PC-3 (cell line): ENCODE measurements at regions of chr9 and their contacts with region 1.

Region 1: GRCh38 chr9:128927731-128928411 is 7.1 kb downstream of the PHYHD1 start:
- DNase-seq: peak; percentile 62
- ATAC-seq: peak; percentile 79
- H3K4me3 ChIP-seq: no peak overlapping the region
- H3K27ac ChIP-seq: no peak overlapping the region
- H3K4me1 ChIP-seq: no peaks in the 10 kb centered on the region
- H3K27me3 ChIP-seq: no peaks in the 10 kb centered on the region
- CTCF ChIP-seq: peak; percentile 85

Region 2: DNA sequence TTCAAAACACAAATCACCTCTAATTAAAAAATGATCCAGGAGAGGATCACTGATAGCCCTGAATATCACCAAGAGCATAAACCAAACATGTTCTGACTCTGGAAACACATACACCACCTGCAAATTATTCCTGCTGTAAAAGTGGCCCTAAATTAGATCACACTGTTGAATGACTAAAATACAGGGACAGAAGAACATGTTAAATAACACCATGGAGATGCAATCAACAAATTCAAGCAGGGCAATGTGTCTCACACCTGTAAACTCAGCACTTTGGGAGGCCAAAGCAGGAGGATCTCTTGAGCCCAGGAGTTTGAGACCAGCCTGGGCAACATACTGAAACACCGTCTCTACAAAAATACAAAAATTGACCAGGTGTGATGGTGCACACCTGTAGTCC is 80.1 kb before region 1 on chr9:
- CTCF ChIA-PET with region 1: no interaction called
- POLR2A ChIA-PET with region 1: no interaction called
- intact Hi-C with region 1: loop called (anchors 1 kb)
- DNase-seq: no peak
- ATAC-seq: no peak
- H3K4me3 ChIP-seq: no peak overlapping the region
- H3K27ac ChIP-seq: no peak overlapping the region
- H3K4me1 ChIP-seq: peaks cover under 1% of the 10 kb centered on the region; the same call in 1 of the 2 replicates
- H3K27me3 ChIP-seq: no peaks in the 10 kb centered on the region
- CTCF ChIP-seq: no peak

Region 3: GRCh38 chr9:128863647-128864046 is 64.2 kb before region 1 on chr9:
- CTCF ChIA-PET with region 1: interaction called, 3 read pairs
- POLR2A ChIA-PET with region 1: no interaction called
- intact Hi-C with region 1: loop called (anchors 1 kb)
- DNase-seq: peak; percentile 67
- ATAC-seq: peak; percentile 80
- H3K4me3 ChIP-seq: no peak overlapping the region
- H3K27ac ChIP-seq: no peak overlapping the region
- H3K4me1 ChIP-seq: no peaks in the 10 kb centered on the region
- H3K27me3 ChIP-seq: no peaks in the 10 kb centered on the region
- CTCF ChIP-seq: peak; percentile 75

Region 4: GRCh38 chr9:128881901-128882681 is 45.8 kb before region 1 on chr9 and contains the starts of genes KYAT1 and LRRC8A:
- CTCF ChIA-PET with region 1: no interaction called
- POLR2A ChIA-PET with region 1: no interaction called
- intact Hi-C with region 1: no loop called
- DNase-seq: peak; percentile 95
- ATAC-seq: peak; percentile 85
- H3K4me3 ChIP-seq: peak within 1 kb of the TSS; percentile 100
- H3K27ac ChIP-seq: peak within 1 kb of the TSS; percentile 34; the same call in 1 of the 2 replicates
- H3K4me1 ChIP-seq: peaks cover 24% of the 10 kb centered on the region
- H3K27me3 ChIP-seq: no peaks in the 10 kb centered on the region
- CTCF ChIP-seq: no peak
- total RNA-seq, gene KYAT1: 7.4 and 12.9 TPM in 2 replicates
- total RNA-seq, gene LRRC8A: 58.9 and 65.5 TPM in 2 replicates

Region 5: GRCh38 chr9:128992995-128993394 is 65.1 kb after region 1 on chr9:
- CTCF ChIA-PET with region 1: no interaction called
- POLR2A ChIA-PET with region 1: interaction called, 14 read pairs
- intact Hi-C with region 1: no loop called
- DNase-seq: peak; percentile 12
- ATAC-seq: peak; percentile 56
- H3K4me3 ChIP-seq: no peak overlapping the region
- H3K27ac ChIP-seq: no peak overlapping the region
- H3K4me1 ChIP-seq: no peaks in the 10 kb centered on the region; the same call in 1 of the 2 replicates
- H3K27me3 ChIP-seq: no peaks in the 10 kb centered on the region
- CTCF ChIP-seq: peak; percentile 39